Kidney (tissue), 22 donors: ENCODE measurements at regions of chr2 and their contacts with region 1.

Region 1: DNA sequence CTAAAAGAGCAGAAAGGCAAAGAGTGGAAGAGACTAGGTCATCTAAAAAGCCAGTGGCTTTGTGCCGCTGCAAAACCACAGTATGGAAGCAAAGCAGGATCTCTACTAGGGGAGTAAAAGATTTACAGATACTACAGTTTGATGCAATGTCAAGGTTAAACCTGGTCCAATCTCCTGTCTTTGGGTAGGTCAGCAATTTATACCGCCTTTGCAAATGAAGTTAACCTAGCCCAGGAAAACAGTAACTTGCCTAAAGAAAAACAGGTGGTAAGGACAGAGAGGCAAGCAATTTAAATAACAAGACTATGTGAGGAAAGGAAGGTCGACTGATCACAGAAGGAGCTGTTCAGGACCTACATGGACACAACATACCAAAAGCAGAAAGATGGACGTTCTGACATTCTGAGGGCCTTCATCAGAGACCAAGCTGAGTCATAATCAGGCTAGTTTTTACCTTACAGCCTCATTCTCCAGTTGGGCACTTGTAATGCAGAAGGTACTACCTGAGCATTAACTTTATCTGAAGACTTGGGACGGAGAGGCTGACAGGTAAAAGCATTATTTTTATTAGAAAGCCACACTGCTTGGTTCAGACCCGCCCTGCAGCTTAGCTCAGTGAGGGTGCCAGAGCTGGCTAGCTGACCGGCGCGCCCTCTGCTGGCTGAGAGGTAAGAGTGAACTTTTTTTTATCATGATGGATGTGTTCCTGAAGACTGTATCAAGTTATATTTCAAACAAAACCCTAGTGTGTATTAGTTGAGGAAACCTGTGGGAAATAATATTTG is 15.9 kb downstream of the CDKL4 start:
- DNase-seq: peak; percentile 76 to 87 (median 85)
- H3K4me3 ChIP-seq: peak overlapping the region; percentile 30 to 39 (median 37)
- H3K27ac ChIP-seq: no peak overlapping the region
- H3K4me1 ChIP-seq: peaks cover 0 to 5% (median 3%) of the 10 kb centered on the region in 3 donors
- H3K27me3 ChIP-seq: no peaks in the 10 kb centered on the region
- CTCF ChIP-seq: peak; percentile 92

Region 2: DNA sequence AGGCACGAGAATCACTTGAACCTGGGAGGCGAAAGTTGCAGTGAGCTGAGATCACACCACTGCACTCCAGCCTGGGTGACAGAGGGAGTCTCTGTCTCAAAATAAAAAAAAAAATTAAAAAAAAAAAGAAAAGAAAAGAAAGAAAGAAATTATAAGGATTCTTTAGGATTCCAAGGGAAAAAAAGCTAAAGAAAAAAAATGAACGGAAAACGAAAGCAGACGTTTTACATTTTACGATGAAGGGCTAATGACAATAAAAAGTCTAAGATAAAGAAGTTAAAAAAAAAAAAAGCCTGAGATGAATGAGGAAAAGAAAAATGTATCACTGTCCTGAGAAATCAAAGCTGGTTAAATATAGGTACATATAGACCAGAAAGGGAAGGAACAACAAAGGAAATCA is 165.5 kb before region 1 on chr2:
- intact Hi-C with region 1: loop called (anchors 5 kb)
- DNase-seq: no peak
- H3K4me3 ChIP-seq: no peak overlapping the region
- H3K27ac ChIP-seq: no peak overlapping the region
- H3K4me1 ChIP-seq: no peaks in the 10 kb centered on the region
- H3K27me3 ChIP-seq: no peaks in the 10 kb centered on the region
- CTCF ChIP-seq: no peak